IMR-90 (cell line): ENCODE measurements at regions of chr5 and their contacts with region 1.

Region 1: DNA sequence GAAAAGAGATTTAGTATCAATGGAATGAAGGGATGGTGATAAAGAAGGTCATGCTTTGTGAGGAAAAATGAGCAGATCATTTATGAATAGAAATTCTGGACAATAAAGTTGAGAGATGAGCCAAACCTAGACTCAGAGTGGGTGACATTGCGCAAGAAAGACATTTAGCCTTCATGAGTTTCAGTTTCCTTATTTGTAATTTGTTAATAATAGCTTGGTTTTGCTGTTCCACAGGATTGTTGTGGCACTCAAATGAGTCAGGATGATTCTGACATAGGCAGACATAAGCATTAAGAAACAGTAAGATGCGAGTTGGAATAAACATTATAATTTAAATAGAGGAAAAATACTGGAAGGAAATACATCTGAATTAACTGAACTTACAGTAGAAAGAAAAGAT is 34.8 kb downstream of the ITGA2 start:
- DNase-seq: peak; percentile 95
- ATAC-seq: peak; percentile 50
- H3K4me3 ChIP-seq: no peak overlapping the region
- H3K27ac ChIP-seq: peak overlapping the region; percentile 47; the same call in 1 of the 2 replicates
- H3K4me1 ChIP-seq: peaks cover 29% of the 10 kb centered on the region
- H3K27me3 ChIP-seq: no peaks in the 10 kb centered on the region
- CTCF ChIP-seq: no peak
- POLR2A ChIP-seq: no peak
- RAD21 ChIP-seq: no peak

Region 2: GRCh38 chr5:52989781-52990527 is 34.0 kb before region 1 on chr5:
- CTCF ChIA-PET with region 1: interaction called, 4 read pairs
- POLR2A ChIA-PET with region 1: no interaction called
- dilution Hi-C with region 1: no loop called
- in situ Hi-C with region 1: no loop called
- intact Hi-C with region 1: loop called (anchors 5 kb)
- DNase-seq: peak; percentile 60
- ATAC-seq: peak; percentile 47
- H3K4me3 ChIP-seq: peak overlapping the region; percentile 93
- H3K27ac ChIP-seq: peak overlapping the region; percentile 56
- H3K4me1 ChIP-seq: peaks cover 16% of the 10 kb centered on the region; the same call in 1 of the 2 replicates
- H3K27me3 ChIP-seq: no peaks in the 10 kb centered on the region
- CTCF ChIP-seq: peak; percentile 50
- POLR2A ChIP-seq: no peak
- RAD21 ChIP-seq: peak; percentile 63